ENCODE measurements at regions of chr17 and their contacts with region 1.

Region 1: DNA sequence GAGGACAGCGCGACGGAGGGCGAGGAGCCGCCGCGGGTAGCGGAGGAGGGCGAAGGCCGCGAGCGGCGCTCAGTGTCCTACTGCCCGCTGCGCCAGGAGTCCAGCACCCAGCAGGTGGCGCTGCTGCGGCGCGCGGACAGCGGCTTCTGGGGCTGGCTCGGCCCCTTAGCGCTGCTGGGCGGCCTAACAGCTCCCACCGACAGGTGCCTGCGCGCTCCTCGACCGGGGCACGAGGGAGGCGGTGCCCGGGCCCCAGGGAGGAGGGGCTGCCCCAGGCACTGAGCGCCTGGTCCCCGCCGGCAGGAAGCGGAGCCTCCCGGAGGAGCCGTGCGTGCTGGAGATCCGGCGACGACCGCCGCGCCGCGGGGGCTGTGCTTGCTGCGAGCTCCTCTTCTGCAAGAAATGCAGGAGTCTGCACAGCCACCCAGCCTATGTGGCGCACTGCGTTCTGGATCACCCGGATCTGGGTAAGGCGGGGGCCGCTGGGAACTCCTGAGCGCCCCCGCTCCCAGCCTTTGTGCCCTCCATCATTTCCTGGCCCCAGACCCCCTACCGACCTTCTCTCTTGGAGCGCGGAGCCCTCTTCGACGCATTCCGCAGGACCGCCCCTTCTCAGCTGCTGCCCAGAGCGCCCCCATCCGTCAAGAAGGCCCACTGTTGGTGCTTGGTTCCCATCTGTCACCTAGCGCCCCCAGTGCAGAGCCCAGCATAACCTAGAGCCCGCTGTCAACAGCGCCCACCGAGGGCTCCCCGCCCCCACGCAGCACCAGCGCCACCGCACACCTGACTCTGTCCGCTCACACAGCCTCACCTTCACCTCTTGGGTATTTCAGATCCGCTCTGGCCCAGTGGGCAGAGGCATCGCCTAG is 3.7 kb downstream of the C17orf50 start:
- DNase-seq: peak; percentile 90
- ATAC-seq: peak; percentile 94
- H3K4me3 Mint-ChIP-seq: peak overlapping the region; percentile 76
- H3K27ac Mint-ChIP-seq: peak overlapping the region; percentile 54
- H3K4me1 Mint-ChIP-seq: peaks cover 13% of the 10 kb centered on the region
- H3K27me3 Mint-ChIP-seq: peaks cover 3% of the 10 kb centered on the region

Region 2: GRCh38 chr17:35555695-35556094 is 208.7 kb before region 1 on chr17:
- CTCF ChIA-PET with region 1: interaction called, 12 read pairs
- DNase-seq: no peak
- ATAC-seq: no peak
- H3K4me3 Mint-ChIP-seq: no peak overlapping the region
- H3K27ac Mint-ChIP-seq: no peak overlapping the region
- H3K4me1 Mint-ChIP-seq: peaks cover 5% of the 10 kb centered on the region
- H3K27me3 Mint-ChIP-seq: peaks cover 26% of the 10 kb centered on the region

Region 3: DNA sequence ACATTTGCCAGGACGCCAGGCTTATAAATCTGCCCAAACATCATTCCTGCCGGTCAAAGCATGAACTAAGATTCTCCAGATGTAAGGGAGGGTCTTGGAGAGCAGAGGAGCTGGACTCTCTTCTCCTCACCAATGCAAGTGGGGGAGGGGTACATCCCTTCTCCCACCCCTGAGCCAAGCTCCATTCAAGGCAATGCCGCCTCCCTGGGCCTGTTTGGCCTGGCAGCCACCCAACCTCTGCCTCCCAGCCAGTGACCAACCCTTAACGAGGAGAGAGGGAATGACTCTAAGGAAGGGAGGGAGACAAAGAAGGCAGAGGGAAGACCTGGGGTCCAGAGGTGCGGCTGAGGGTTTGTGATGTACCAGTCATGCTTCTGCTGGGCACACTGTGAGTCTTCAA is 10.1 kb after region 1 on chr17:
- CTCF ChIA-PET with region 1: interaction called, 36 read pairs
- DNase-seq: no peak
- ATAC-seq: no peak
- H3K4me3 Mint-ChIP-seq: no peak overlapping the region
- H3K27ac Mint-ChIP-seq: no peak overlapping the region
- H3K4me1 Mint-ChIP-seq: no peaks in the 10 kb centered on the region
- H3K27me3 Mint-ChIP-seq: peaks cover 54% of the 10 kb centered on the region

Region 4: GRCh38 chr17:35794988-35795824 is 30.8 kb after region 1 on chr17 and contains the start of gene MMP28:
- CTCF ChIA-PET with region 1: interaction called, 106 read pairs
- DNase-seq: peak; percentile 52
- ATAC-seq: peak; percentile 88
- H3K4me3 Mint-ChIP-seq: peak within 1 kb of the TSS; percentile 62
- H3K27ac Mint-ChIP-seq: no peak within 1 kb of the TSS
- H3K4me1 Mint-ChIP-seq: peaks cover 15% of the 10 kb centered on the region
- H3K27me3 Mint-ChIP-seq: peaks cover 73% of the 10 kb centered on the region
- total RNA-seq, gene MMP28: not detected

Region 5: GRCh38 chr17:35819456-35819855 is 55.1 kb after region 1 on chr17:
- CTCF ChIA-PET with region 1: interaction called, 27 read pairs
- DNase-seq: no peak
- ATAC-seq: no peak
- H3K4me3 Mint-ChIP-seq: no peak overlapping the region
- H3K27ac Mint-ChIP-seq: peak overlapping the region; percentile 31
- H3K4me1 Mint-ChIP-seq: peaks cover 35% of the 10 kb centered on the region
- H3K27me3 Mint-ChIP-seq: no peaks in the 10 kb centered on the region

Region 6: GRCh38 chr17:35841505-35841904 is 77.1 kb after region 1 on chr17:
- CTCF ChIA-PET with region 1: interaction called, 10 read pairs
- DNase-seq: no peak
- ATAC-seq: no peak
- H3K4me3 Mint-ChIP-seq: no peak overlapping the region
- H3K27ac Mint-ChIP-seq: no peak overlapping the region
- H3K4me1 Mint-ChIP-seq: peaks cover 16% of the 10 kb centered on the region
- H3K27me3 Mint-ChIP-seq: no peaks in the 10 kb centered on the region